Naive thymus-derived CD4-positive, alpha-beta T cell (primary cell): ENCODE measurements at regions of chr18 and their contacts with region 1.

Region 1: GRCh38 chr18:76756531-76757253 is 65.7 kb upstream of the ZNF236 start:
- DNase-seq: no peak
- ATAC-seq: no peak
- H3K4me3 ChIP-seq: no peak overlapping the region
- H3K4me3 Mint-ChIP-seq: no peak overlapping the region
- H3K27ac ChIP-seq: no peak overlapping the region
- H3K27ac Mint-ChIP-seq: no peak overlapping the region
- H3K4me1 ChIP-seq: peaks cover 0 to 4% of the 10 kb centered on the region in 2 donors
- H3K4me1 Mint-ChIP-seq: peaks cover 3 to 8% (median 5%) of the 10 kb centered on the region in 7 donors
- H3K27me3 ChIP-seq: no peaks in the 10 kb centered on the region
- H3K27me3 Mint-ChIP-seq: peaks cover 0 to 17% (median 0%) of the 10 kb centered on the region in 5 donors

Region 2: DNA sequence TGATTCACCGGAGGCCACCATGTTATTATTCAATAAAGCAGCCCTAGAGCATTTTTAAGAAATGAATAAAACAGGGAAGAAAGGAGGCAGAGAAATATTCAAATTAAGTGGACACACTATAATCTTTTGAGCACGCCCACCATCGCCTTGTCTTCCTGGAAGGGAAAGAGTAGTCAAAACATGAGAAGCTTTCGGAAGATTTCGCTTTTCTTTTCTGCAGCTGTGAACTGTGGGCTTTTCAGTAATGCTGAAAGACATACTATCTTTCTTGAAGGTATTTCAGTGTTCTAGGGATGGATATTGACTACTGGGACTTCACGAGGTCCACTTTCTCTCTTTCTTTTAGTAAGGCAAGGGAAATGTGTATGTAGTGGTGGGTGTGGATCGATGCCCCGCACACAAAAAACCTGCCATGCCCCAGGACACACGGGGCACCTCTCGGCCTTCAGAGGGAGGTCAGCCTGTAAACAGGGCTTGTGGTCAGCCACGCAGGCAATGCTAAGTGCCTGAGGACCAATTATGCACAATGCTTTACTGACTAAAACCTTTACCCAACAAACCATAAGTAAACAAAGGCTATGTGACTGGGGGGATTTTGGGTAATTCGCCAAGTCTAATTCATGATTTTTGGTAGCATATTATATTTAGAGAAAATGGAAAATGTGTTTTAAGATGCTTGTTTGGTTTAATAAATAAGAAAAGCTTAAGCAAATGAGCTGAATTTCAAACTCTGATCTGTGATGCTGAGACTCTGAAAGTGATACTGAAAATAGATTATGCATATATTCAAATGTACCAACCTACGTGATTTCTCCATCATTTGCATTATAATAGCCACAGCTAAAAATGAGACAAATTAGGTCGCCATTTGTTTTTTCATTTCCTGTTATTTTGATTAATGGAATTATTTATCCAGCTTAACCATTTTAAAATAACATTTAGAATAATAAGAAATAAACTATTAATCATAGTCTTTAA is 392.1 kb before region 1 on chr18:
- CTCF ChIA-PET with region 1: no interaction called
- POLR2A ChIA-PET with region 1: no interaction called
- intact Hi-C with region 1: no loop called
- DNase-seq: no peak
- ATAC-seq: no peak
- H3K4me3 ChIP-seq: no peak overlapping the region
- H3K4me3 Mint-ChIP-seq: no peak overlapping the region
- H3K27ac ChIP-seq: no peak overlapping the region
- H3K27ac Mint-ChIP-seq: no peak overlapping the region
- H3K4me1 ChIP-seq: no peaks in the 10 kb centered on the region
- H3K4me1 Mint-ChIP-seq: peaks cover 2 to 15% (median 11%) of the 10 kb centered on the region in 7 donors
- H3K27me3 ChIP-seq: no peaks in the 10 kb centered on the region
- H3K27me3 Mint-ChIP-seq: peaks cover 0 to 7% (median 0%) of the 10 kb centered on the region in 5 donors

Region 3: GRCh38 chr18:76633588-76634269 is 123.0 kb before region 1 on chr18:
- CTCF ChIA-PET with region 1: no interaction called
- POLR2A ChIA-PET with region 1: no interaction called
- intact Hi-C with region 1: no loop called
- DNase-seq: no peak
- ATAC-seq: no peak
- H3K4me3 ChIP-seq: no peak overlapping the region
- H3K4me3 Mint-ChIP-seq: no peak overlapping the region
- H3K27ac ChIP-seq: no peak overlapping the region
- H3K27ac Mint-ChIP-seq: no peak overlapping the region
- H3K4me1 ChIP-seq: no peaks in the 10 kb centered on the region
- H3K4me1 Mint-ChIP-seq: no peaks in the 10 kb centered on the region
- H3K27me3 ChIP-seq: no peaks in the 10 kb centered on the region
- H3K27me3 Mint-ChIP-seq: peaks cover 17 to 31% (median 25%) of the 10 kb centered on the region in 5 donors

Region 4: GRCh38 chr18:76697441-76697901 is 59.2 kb before region 1 on chr18:
- CTCF ChIA-PET with region 1: no interaction called
- POLR2A ChIA-PET with region 1: interaction called, 3 read pairs
- intact Hi-C with region 1: loop called in 1 of 2 experiments (anchors 1 kb)
- DNase-seq: no peak
- ATAC-seq: no peak
- H3K4me3 ChIP-seq: no peak overlapping the region
- H3K4me3 Mint-ChIP-seq: no peak overlapping the region
- H3K27ac ChIP-seq: no peak overlapping the region
- H3K27ac Mint-ChIP-seq: no peak overlapping the region
- H3K4me1 ChIP-seq: no peaks in the 10 kb centered on the region
- H3K4me1 Mint-ChIP-seq: peaks cover 0 to 7% (median 0%) of the 10 kb centered on the region in 7 donors
- H3K27me3 ChIP-seq: no peaks in the 10 kb centered on the region
- H3K27me3 Mint-ChIP-seq: peaks cover 44 to 59% (median 48%) of the 10 kb centered on the region in 5 donors